ENCODE measurements at regions of chr1 and their contacts with region 1.

Region 1: GRCh38 chr1:80751204-80751603 is 1049.5 kb upstream of the ADGRL2 start:
- DNase-seq: no peak
- H3K4me3 Mint-ChIP-seq: no peak overlapping the region
- H3K27ac Mint-ChIP-seq: no peak overlapping the region
- H3K4me1 Mint-ChIP-seq: no peaks in the 10 kb centered on the region
- H3K27me3 Mint-ChIP-seq: no peaks in the 10 kb centered on the region
- CTCF ChIP-seq: no peak

Region 2: DNA sequence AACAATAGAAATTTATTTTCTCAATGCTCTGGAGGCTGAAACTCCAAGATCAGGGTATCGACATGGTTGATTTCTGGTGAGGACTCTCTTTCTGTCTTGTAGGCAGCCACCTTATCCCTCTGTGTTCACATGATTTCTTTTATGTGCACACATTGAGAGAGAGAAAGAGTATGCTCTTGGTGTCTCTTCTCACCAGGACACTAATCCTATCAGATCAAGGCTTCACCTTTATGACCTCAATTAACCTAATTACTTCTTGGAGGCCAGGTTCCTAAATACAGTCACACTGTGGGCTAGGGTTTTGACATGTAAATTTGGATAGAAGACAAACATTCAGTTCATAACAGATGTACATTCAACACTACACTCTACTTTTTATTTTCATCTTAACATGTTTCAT is 44.7 kb before region 1 on chr1:
- CTCF ChIA-PET with region 1: no interaction called
- intact Hi-C with region 1: loop called (anchors 2 kb)
- DNase-seq: no peak
- H3K4me3 Mint-ChIP-seq: no peak overlapping the region
- H3K27ac Mint-ChIP-seq: no peak overlapping the region
- H3K4me1 Mint-ChIP-seq: no peaks in the 10 kb centered on the region
- H3K27me3 Mint-ChIP-seq: no peaks in the 10 kb centered on the region
- CTCF ChIP-seq: no peak

Region 3: DNA sequence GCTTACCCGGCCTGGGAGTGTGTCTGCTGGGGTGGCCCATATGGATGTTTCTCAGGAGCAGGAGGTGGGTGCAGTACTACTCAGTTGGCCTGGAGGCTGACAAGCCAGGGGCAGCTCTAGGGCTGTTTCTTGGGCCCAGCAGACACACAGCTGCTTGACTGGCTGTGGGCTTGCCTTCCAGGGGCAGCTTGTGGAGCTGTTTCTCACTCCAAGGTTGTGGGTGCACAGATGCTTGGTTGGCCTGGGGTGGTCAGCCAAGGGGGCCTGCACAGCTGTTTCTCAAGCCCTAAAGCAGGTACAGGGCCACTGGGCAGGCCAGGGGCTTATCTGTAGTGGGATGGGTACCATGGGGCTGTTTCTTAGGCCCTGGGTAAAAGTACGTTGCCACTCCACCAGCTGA is 28.6 kb before region 1 on chr1:
- CTCF ChIA-PET with region 1: no interaction called
- intact Hi-C with region 1: no loop called
- DNase-seq: no peak
- H3K4me3 Mint-ChIP-seq: no peak overlapping the region
- H3K27ac Mint-ChIP-seq: no peak overlapping the region
- H3K4me1 Mint-ChIP-seq: no peaks in the 10 kb centered on the region
- H3K27me3 Mint-ChIP-seq: no peaks in the 10 kb centered on the region
- CTCF ChIP-seq: no peak